PC-3 (cell line): ENCODE measurements at regions of chr9 and their contacts with region 1.

Region 1: DNA sequence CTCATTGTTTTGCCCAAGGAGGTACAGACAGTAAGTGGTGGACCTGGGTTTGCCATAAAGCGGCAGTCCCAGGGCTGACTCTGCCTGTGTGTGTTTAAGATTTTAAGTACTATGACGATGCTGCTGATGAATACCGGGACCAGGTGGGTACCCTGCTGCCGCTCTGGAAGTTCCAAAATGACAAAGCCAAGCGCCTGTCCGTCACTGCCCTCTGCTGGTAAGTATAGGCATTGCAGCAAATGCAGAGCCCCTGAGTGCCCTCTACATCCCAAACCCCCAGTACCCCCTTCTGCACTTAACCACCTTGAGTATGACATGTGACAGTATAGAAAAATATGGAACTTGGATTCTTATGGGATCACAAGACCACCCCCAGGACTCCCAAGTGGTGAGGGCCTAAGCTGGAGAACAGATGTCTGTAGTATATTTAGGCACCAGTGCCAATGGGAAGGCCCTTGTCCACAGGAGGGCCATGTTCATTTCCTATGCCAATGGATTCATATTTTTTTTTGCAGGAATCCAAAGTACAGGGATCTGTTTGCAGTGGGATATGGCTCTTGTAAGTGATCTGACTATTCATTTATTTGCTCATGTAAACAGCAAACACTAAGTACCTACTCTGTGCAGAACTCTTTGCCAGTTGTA is 22.0 kb downstream of the ENHO start:
- DNase-seq: peak; percentile 74
- ATAC-seq: no peak
- H3K4me3 ChIP-seq: no peak overlapping the region
- H3K27ac ChIP-seq: no peak overlapping the region
- H3K4me1 ChIP-seq: peaks cover 31% of the 10 kb centered on the region
- H3K27me3 ChIP-seq: no peaks in the 10 kb centered on the region
- CTCF ChIP-seq: peak; percentile 88

Region 2: DNA sequence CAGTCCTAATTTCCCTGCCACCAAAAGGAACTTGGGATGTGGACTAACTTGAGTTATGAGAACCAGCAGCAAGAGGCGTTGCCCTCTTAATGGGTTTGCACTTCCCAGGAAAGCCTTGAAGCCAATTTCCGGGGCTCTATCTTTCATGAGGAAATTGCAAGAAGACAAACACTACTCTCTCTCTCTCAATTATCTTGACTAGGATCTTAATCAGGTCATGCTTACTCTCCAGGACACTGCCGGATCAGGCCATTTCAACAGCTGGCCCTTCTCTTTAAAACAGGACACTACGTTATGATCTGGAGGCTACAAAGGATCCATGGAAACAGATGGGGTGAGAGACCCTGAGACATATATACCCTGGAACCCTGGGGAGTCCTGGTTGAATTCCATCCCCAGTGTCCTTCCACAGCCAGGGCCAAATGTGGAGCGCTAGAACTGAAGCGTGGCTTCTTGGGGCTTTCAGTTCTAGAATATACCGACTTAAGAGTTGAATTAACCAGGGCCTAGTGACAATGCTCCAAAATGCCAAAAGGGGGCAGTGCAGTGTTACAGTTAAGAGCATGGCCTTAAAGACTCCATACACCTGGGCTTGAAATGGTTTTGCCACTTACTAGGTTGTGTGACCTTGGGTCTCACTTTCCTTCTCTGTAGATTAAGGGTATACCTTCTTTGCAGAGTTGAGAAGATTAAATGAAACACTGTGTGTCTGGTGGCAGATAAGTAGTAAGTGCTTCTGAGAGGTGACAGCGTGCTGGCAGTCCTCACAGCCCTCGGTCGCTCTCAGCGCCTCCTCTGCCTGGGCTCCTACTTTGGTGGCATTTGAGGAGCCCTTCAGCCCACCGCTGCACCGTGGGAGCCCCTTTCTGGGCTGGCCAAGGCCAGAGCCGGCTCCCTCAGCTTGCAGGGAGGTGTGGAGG is 63.5 kb before region 1 on chr9:
- CTCF ChIA-PET with region 1: no interaction called
- POLR2A ChIA-PET with region 1: no interaction called
- intact Hi-C with region 1: loop called (anchors 2 kb)
- DNase-seq: peak; percentile 79
- ATAC-seq: peak; percentile 78
- H3K4me3 ChIP-seq: no peak overlapping the region
- H3K27ac ChIP-seq: no peak overlapping the region
- H3K4me1 ChIP-seq: peaks cover 7% of the 10 kb centered on the region; the same call in 1 of the 2 replicates
- H3K27me3 ChIP-seq: no peaks in the 10 kb centered on the region
- CTCF ChIP-seq: peak; percentile 79

Region 3: DNA sequence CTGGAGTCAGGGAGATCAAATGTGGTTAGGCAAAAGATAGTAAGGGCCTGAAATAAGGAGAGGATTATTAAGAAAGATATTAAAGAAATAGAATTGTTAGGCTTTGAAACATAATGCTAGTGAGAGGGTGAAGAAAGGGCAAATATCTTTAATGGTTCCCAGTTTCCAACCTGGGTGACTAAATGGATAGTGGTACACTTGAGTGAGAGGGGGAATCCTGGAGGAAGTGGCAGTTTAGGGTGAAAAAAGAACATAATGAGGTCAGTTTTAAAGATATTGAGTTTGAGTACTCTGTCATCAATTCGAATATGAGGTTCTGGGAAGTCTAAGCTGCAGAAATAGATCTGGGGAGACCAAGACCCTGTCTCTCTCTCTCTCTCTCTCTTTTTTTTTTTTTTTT is 23.2 kb before region 1 on chr9:
- CTCF ChIA-PET with region 1: interaction called, 11 read pairs
- POLR2A ChIA-PET with region 1: no interaction called
- intact Hi-C with region 1: no loop called
- DNase-seq: no peak
- ATAC-seq: no peak
- H3K4me3 ChIP-seq: no peak overlapping the region
- H3K27ac ChIP-seq: no peak overlapping the region
- H3K4me1 ChIP-seq: no peaks in the 10 kb centered on the region
- H3K27me3 ChIP-seq: no peaks in the 10 kb centered on the region
- CTCF ChIP-seq: no peak

Region 4: GRCh38 chr9:34546834-34547827 is 46.4 kb after region 1 on chr9:
- CTCF ChIA-PET with region 1: interaction called, 8 read pairs
- POLR2A ChIA-PET with region 1: no interaction called
- intact Hi-C with region 1: loop called (anchors 1 kb)
- DNase-seq: peak; percentile 74
- ATAC-seq: peak; percentile 63
- H3K4me3 ChIP-seq: no peak overlapping the region
- H3K27ac ChIP-seq: no peak overlapping the region
- H3K4me1 ChIP-seq: no peaks in the 10 kb centered on the region
- H3K27me3 ChIP-seq: no peaks in the 10 kb centered on the region
- CTCF ChIP-seq: peak; percentile 76

Region 5: GRCh38 chr9:34591248-34591916 is 90.6 kb after region 1 on chr9:
- CTCF ChIA-PET with region 1: interaction called, 15 read pairs
- POLR2A ChIA-PET with region 1: no interaction called
- intact Hi-C with region 1: loop called (anchors 5 kb)
- DNase-seq: peak; percentile 71
- ATAC-seq: peak; percentile 90
- H3K4me3 ChIP-seq: no peak overlapping the region
- H3K27ac ChIP-seq: no peak overlapping the region
- H3K4me1 ChIP-seq: no peaks in the 10 kb centered on the region
- H3K27me3 ChIP-seq: peaks cover 51% of the 10 kb centered on the region
- CTCF ChIP-seq: peak; percentile 65

Region 6: DNA sequence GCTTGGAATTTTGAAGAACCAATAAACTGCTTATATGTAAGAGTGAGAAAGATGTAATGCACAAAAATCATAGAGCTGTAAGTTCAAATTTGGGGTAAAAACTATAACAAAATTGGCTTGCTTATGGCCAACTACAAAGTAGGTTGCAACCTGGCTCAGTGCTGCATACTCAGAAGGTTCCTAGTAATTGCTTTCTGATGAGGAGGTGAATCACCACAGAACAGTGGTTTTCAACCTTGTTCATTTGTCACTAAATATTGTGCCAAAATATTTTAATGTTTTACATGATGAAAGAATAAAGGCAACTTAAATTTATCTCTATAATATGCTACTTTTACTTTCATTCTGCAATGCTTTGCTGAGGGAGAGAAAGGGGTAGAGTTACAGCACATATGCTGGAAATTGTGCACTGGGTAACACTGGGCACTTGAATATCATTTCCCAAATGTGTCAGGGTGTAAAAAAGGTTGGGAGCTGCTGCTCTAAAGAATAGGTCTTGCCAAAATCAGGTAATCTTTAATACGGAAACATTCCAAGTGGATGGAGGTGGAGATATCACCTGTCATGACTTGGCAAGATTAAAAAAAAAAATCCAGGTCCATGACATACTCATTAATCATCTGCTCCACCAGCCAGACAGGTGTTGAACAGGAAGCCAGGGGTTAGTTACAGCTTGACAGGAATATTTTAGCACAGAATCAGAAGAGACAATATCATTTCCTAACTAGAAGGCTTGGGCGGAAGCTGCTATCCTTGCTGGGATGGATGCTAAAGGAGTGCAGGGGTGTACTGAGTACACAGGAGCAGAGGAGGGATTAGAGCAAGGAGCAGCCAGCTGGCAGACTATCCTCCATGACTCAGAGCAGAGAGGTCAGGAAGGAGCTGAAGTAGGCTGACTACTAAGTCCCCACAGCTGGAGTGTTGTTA is 243.8 kb after region 1 on chr9:
- CTCF ChIA-PET with region 1: interaction called, 16 read pairs
- POLR2A ChIA-PET with region 1: no interaction called
- intact Hi-C with region 1: no loop called
- DNase-seq: peak; percentile 90
- ATAC-seq: peak; percentile 92
- H3K4me3 ChIP-seq: no peak overlapping the region; the same call in 1 of the 2 replicates
- H3K27ac ChIP-seq: peak overlapping the region; percentile 64
- H3K4me1 ChIP-seq: peaks cover 35% of the 10 kb centered on the region
- H3K27me3 ChIP-seq: no peaks in the 10 kb centered on the region
- CTCF ChIP-seq: no peak